Activated B cell treated with CpG ODN at 0.5 μM for 24 hours (primary cell): ENCODE measurements at regions of chrX and their contacts with region 1.

Region 1: GRCh38 chrX:83469551-83469950 is 38.5 kb upstream of the POU3F4 start:
- DNase-seq: no peak
- ATAC-seq: no peak
- H3K4me3 Mint-ChIP-seq: no peak overlapping the region
- H3K27ac Mint-ChIP-seq: no peak overlapping the region
- H3K4me1 Mint-ChIP-seq: no peaks in the 10 kb centered on the region
- H3K27me3 Mint-ChIP-seq: no peaks in the 10 kb centered on the region
- CTCF ChIP-seq: no peak

Region 2: DNA sequence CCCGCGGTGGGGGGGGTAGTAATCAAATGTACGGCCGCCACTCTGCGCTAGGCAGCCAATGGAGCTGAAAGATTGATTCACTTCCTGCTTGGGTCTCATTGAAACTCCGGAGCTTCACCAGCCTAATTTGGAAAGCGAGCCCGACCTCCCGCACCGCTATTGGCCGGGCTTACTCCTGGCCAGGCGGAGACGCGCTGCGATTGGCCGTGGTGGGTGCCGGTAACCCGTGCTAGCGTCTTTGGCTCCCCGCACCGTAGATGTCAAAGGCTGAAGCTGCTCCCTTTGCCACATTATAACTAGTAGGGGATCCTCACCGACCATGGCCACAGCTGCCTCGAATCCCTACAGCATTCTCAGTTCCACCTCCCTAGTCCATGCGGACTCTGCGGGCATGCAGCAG is 38.5 kb after region 1 on chrX and contains the start of gene POU3F4:
- CTCF ChIA-PET with region 1: no interaction called
- POLR2A ChIA-PET with region 1: no interaction called
- intact Hi-C with region 1: no loop called
- DNase-seq: no peak
- ATAC-seq: no peak
- H3K4me3 Mint-ChIP-seq: no peak within 1 kb of the TSS
- H3K27ac Mint-ChIP-seq: no peak within 1 kb of the TSS
- H3K4me1 Mint-ChIP-seq: peaks cover 2% of the 10 kb centered on the region
- H3K27me3 Mint-ChIP-seq: peaks cover 26% of the 10 kb centered on the region
- CTCF ChIP-seq: no peak
- total RNA-seq, gene POU3F4: not detected in 2 replicates

Region 3: GRCh38 chrX:83630662-83631061 is 161.1 kb after region 1 on chrX:
- CTCF ChIA-PET with region 1: interaction called, 14 read pairs
- POLR2A ChIA-PET with region 1: interaction called, 3 read pairs
- intact Hi-C with region 1: loop called (anchors 1 kb)
- DNase-seq: no peak
- ATAC-seq: no peak
- H3K4me3 Mint-ChIP-seq: no peak overlapping the region
- H3K27ac Mint-ChIP-seq: no peak overlapping the region
- H3K4me1 Mint-ChIP-seq: peaks cover 15% of the 10 kb centered on the region
- H3K27me3 Mint-ChIP-seq: no peaks in the 10 kb centered on the region
- CTCF ChIP-seq: no peak

Region 4: GRCh38 chrX:83845397-83845796 is 375.8 kb after region 1 on chrX:
- CTCF ChIA-PET with region 1: no interaction called
- POLR2A ChIA-PET with region 1: no interaction called
- intact Hi-C with region 1: loop called (anchors 5 kb)
- DNase-seq: no peak
- ATAC-seq: no peak
- H3K4me3 Mint-ChIP-seq: no peak overlapping the region
- H3K27ac Mint-ChIP-seq: no peak overlapping the region
- H3K4me1 Mint-ChIP-seq: no peaks in the 10 kb centered on the region
- H3K27me3 Mint-ChIP-seq: no peaks in the 10 kb centered on the region
- CTCF ChIP-seq: no peak